Gastrocnemius medialis (tissue), 4 donors: ENCODE measurements at regions of chr22 and their contacts with region 1.

Region 1: GRCh38 chr22:41301105-41302020 is at the start of gene ZC3H7B:
- DNase-seq: peak; percentile 61 to 79
- ATAC-seq: peak; percentile 94 to 96
- H3K4me3 ChIP-seq: peak within 1 kb of the TSS; percentile 85 to 95 (median 90)
- H3K27ac ChIP-seq: peak within 1 kb of the TSS; percentile 83 to 92 (median 88)
- H3K4me1 ChIP-seq: peaks cover 19 to 27% of the 10 kb centered on the region in 2 donors
- H3K27me3 ChIP-seq: no peaks in the 10 kb centered on the region
- CTCF ChIP-seq: peak in 4 of 5 experiments; percentile 25 to 72 (median 58)
- POLR2A ChIP-seq: peak; percentile 49 to 62
- total RNA-seq, gene ZC3H7B: 17.0 to 22.6 (median 20.5) TPM

Region 2: DNA sequence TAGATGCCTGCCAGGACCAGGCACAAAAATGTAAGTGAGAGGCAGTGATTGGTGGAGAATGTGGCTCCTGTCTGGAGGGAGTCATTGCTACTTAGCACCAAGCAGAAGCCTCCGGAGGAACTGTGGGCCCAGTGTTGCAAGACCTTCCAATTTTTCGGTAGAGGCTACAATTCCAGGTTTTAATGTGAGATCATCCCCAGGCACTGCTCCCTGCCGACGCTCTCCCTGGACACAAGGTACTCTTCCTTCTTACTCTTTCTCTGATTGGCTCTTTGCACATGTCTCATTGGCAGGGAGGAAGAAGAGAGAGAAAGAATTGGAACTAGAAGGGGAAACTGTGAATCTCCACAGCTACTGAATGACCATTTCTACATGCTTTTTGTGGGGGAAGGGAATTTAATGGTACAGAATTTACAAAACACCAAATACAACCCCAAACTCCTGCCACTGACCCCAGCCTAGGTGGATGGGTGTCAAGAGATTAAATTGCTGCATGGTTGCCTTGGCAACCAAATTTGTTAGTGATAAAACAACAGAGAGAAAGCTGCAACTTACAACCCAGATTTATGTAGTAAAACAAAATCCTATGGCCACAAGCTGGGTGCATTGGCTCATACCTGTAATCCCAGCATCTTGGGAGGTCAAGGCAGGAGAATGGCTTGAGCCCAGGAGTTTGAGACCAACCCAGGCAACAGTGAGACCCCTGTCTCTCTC is 262.5 kb before region 1 on chr22:
- in situ Hi-C with region 1: no loop called
- intact Hi-C with region 1: no loop called
- DNase-seq: no peak
- ATAC-seq: no peak
- H3K4me3 ChIP-seq: no peak overlapping the region
- H3K27ac ChIP-seq: no peak overlapping the region
- H3K4me1 ChIP-seq: no peaks in the 10 kb centered on the region
- H3K27me3 ChIP-seq: peaks cover 0 to 2% (median 0%) of the 10 kb centered on the region in 3 donors
- CTCF ChIP-seq: no peak
- POLR2A ChIP-seq: no peak

Region 3: GRCh38 chr22:41204992-41205900 is 96.1 kb before region 1 on chr22 and contains the start of gene L3MBTL2:
- in situ Hi-C with region 1: loop called in 1 of 4 experiments (anchors 10 kb)
- intact Hi-C with region 1: no loop called
- DNase-seq: peak; percentile 95 to 97
- ATAC-seq: peak; percentile 99 to 100
- H3K4me3 ChIP-seq: peak within 1 kb of the TSS; percentile 62 to 97 (median 82)
- H3K27ac ChIP-seq: peak within 1 kb of the TSS; percentile 83 to 93 (median 90)
- H3K4me1 ChIP-seq: peaks cover 6 to 10% of the 10 kb centered on the region in 2 donors
- H3K27me3 ChIP-seq: no peaks in the 10 kb centered on the region
- CTCF ChIP-seq: no peak
- POLR2A ChIP-seq: peak in 1 of 2 donors; percentile 43
- total RNA-seq, gene L3MBTL2: 4.8 to 14.4 (median 12.4) TPM

Region 4: DNA sequence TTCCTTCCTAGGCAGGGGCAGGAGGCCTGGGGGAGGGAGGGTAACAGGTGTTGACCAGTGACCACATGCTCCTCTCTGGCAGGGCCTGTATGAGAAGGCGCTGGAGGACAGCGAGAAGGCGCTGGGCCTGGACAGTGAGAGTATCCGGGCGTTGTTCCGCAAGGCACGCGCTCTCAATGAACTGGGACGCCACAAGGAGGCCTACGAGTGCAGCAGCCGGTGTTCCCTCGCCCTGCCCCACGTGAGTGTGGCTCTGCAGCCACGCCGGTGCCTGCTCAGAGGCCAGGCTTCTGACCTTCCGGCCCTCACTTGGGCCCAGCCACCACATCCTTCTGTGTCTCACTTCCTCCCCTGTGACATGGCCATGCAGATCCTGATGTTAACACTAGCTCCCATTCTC is 25.8 kb after region 1 on chr22:
- in situ Hi-C with region 1: no loop called
- intact Hi-C with region 1: loop called (anchors 1 kb)
- DNase-seq: peak; percentile 93 to 97
- ATAC-seq: peak; percentile 95 to 96
- H3K4me3 ChIP-seq: no peak overlapping the region
- H3K27ac ChIP-seq: peak overlapping the region; percentile 88 to 95 (median 92)
- H3K4me1 ChIP-seq: peaks cover 18 to 19% of the 10 kb centered on the region in 2 donors
- H3K27me3 ChIP-seq: no peaks in the 10 kb centered on the region
- CTCF ChIP-seq: peak in 4 of 5 experiments; percentile 41 to 64 (median 52)
- POLR2A ChIP-seq: peak in 1 of 2 donors; percentile 42

Region 5: GRCh38 chr22:41367039-41367679 is 65.8 kb after region 1 on chr22:
- in situ Hi-C with region 1: no loop called
- intact Hi-C with region 1: loop called (anchors 5 kb)
- DNase-seq: peak; percentile 90 to 97
- ATAC-seq: peak; percentile 79 to 84
- H3K4me3 ChIP-seq: peak overlapping the region; percentile 37 to 51 (median 44)
- H3K27ac ChIP-seq: peak overlapping the region; percentile 76 to 86 (median 82)
- H3K4me1 ChIP-seq: peaks cover 26 to 44% of the 10 kb centered on the region in 2 donors
- H3K27me3 ChIP-seq: no peaks in the 10 kb centered on the region
- CTCF ChIP-seq: peak in 1 of 5 experiments; percentile 44
- POLR2A ChIP-seq: peak; percentile 13 to 30